Activated CD4-positive, alpha-beta T cell treated with anti-CD3 and anti-CD28 coated beads, Interleukin-2, amount 10 ng/mL, durations not matched to agents 24 days and 14 days (primary cell): ENCODE measurements at regions of chr2 and their contacts with region 1.

Region 1: DNA sequence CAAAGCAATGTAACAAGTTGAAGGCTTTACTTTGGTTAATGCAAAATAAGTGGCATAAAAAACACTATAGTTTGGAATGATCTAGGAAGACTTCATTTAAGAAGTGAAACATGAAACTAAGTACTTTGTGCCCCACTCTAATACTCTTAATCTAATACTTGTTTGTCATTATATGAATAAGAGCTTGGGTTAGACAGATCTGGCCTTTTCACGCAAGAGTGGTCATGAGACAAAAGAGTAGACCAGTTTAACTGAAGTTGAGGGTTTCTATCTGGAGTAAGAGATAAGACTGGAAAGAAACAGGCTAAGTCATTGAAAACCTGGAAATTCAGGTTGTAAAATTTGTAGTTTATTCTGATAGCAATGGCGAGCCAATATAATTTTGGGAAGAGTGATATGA is 2.8 kb downstream of the SLC30A6 start:
- DNase-seq: no peak
- H3K4me3 Mint-ChIP-seq: no peak overlapping the region
- H3K27ac Mint-ChIP-seq: no peak overlapping the region
- H3K4me1 Mint-ChIP-seq: peaks cover 33% of the 10 kb centered on the region
- H3K27me3 Mint-ChIP-seq: no peaks in the 10 kb centered on the region

Region 2: GRCh38 chr2:32039447-32040219 is 128.9 kb before region 1 on chr2 and contains the start of gene DPY30:
- intact Hi-C with region 1: loop called (anchors 1 kb)
- DNase-seq: peak; percentile 97
- H3K4me3 Mint-ChIP-seq: peak within 1 kb of the TSS; percentile 97
- H3K27ac Mint-ChIP-seq: peak within 1 kb of the TSS; percentile 92
- H3K4me1 Mint-ChIP-seq: peaks cover 14% of the 10 kb centered on the region
- H3K27me3 Mint-ChIP-seq: no peaks in the 10 kb centered on the region
- total RNA-seq, gene DPY30: 71.8 and 74.4 TPM in 2 replicates

Region 3: DNA sequence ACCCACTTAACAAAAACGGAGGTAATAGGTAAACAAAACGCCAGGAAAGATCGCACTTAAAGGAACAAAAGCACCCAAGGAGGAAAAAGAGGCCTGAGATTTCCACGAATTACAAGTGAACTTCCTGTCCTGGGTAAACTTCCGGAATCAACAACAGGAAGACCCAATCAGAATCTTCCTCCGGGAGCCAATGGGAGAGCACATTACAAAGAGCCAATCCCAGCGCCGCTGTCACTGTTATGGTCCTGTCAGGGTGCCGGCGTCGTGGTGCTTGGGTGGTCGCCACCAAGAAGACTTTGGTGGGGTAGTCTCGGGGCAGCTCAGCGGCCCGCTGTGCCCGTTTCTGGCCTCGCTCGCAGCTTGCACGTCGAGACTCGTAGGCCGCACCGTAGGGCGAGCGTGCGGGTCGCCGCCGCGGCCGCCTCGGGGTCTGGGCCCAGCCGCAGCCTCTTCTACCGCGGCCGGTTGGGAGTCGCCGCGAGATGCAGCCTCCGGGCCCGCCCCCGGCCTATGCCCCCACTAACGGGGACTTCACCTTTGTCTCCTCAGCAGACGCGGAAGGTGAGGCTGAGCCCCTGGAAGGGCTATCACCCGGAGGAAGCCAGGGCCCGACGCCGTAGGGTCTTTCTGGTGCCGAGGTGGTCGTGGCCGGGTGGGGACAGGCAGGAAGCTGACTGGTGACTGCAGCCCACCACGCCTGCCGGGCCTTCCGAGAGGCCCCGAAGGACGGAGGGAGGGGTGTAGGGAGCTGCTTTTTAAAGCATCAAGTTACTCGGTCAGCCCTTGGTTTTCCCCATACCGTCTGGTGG is 109.4 kb after region 1 on chr2 and contains the start of gene YIPF4:
- intact Hi-C with region 1: loop called (anchors 2 kb)
- DNase-seq: peak; percentile 97
- H3K4me3 Mint-ChIP-seq: peak within 1 kb of the TSS; percentile 92
- H3K27ac Mint-ChIP-seq: peak within 1 kb of the TSS; percentile 89
- H3K4me1 Mint-ChIP-seq: peaks cover 18% of the 10 kb centered on the region
- H3K27me3 Mint-ChIP-seq: peaks cover 7% of the 10 kb centered on the region
- total RNA-seq, gene YIPF4: 34.5 and 37.9 TPM in 2 replicates

Region 4: DNA sequence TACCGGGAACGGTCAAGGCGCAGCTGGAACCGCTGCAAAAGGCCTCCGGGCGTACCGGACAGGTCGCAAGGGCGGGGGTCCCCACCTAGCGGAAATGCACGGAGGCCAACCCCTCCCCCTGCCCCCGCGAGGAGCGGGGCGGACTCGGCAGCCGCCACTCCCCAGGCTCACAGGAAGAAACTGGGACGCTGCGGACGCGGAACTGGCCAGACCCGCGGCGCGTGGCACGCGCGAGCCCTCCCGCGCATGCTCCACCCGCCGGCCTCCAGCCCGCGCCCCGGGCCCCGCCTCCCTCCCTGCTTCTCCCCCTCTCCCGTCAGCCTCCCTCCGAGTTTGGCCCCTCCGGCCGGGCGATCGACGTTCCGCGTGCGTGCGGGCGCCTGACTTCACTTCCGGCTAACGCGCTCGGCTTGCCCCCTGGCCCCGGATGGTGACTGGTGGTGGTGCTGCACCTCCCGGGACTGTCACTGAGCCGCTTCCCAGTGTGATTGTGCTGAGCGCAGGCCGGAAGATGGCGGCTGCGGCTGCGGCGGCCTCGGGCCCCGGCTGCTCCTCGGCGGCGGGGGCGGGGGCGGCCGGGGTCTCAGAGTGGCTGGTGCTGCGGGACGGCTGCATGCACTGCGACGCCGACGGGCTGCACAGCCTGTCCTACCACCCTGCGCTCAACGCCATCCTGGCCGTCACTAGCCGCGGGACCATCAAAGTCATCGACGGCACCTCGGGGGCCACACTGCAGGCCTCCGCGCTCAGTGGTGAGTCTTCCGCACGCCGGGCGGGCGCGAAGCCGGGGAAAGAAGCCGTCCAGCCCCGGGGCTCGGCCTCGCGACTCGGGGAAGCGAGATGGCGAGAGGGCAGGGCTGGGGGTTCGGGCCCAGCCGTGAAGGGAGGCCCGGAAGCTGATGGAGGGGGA is 188.5 kb after region 1 on chr2 and contains the start of gene BIRC6:
- intact Hi-C with region 1: loop called (anchors 1 kb)
- DNase-seq: peak; percentile 98
- H3K4me3 Mint-ChIP-seq: peak within 1 kb of the TSS; percentile 92
- H3K27ac Mint-ChIP-seq: peak within 1 kb of the TSS; percentile 96
- H3K4me1 Mint-ChIP-seq: peaks cover 31% of the 10 kb centered on the region
- H3K27me3 Mint-ChIP-seq: no peaks in the 10 kb centered on the region
- total RNA-seq, gene BIRC6: 101 and 105 TPM in 2 replicates